Head of caudate nucleus (tissue), 42 donors: ENCODE measurements at regions of chr2 and their contacts with region 1.

Region 1: GRCh38 chr2:218710687-218711549 is at the start of gene TTLL4:
- DNase-seq: peak; percentile 95 to 100 (median 99)

Region 2: DNA sequence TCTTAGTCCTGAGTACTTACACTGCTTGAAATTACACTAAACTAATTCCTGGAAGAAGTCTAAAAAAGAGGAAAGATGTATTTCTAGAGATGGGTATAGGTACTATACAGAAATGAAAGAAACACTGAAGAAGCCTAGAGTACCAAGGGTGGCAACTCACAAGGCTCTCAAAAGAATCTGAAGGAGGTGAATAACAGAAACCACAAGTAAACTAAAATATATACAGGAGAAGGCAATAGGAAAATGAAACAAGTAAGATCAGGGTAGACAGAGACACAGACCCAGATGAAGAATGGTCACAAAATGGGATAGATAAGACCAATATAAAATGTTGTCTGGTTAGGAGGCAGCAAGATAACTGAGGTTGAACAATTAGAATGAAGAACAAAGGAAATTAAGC is 202.6 kb before region 1 on chr2:
- intact Hi-C with region 1: no loop called
- DNase-seq: no peak

Region 3: GRCh38 chr2:218671654-218672566 is 39.0 kb before region 1 on chr2 and contains the starts of genes RNF25 and STK36:
- intact Hi-C with region 1: loop called (anchors 5 kb)
- DNase-seq: peak; percentile 83 to 97 (median 92)

Region 4: DNA sequence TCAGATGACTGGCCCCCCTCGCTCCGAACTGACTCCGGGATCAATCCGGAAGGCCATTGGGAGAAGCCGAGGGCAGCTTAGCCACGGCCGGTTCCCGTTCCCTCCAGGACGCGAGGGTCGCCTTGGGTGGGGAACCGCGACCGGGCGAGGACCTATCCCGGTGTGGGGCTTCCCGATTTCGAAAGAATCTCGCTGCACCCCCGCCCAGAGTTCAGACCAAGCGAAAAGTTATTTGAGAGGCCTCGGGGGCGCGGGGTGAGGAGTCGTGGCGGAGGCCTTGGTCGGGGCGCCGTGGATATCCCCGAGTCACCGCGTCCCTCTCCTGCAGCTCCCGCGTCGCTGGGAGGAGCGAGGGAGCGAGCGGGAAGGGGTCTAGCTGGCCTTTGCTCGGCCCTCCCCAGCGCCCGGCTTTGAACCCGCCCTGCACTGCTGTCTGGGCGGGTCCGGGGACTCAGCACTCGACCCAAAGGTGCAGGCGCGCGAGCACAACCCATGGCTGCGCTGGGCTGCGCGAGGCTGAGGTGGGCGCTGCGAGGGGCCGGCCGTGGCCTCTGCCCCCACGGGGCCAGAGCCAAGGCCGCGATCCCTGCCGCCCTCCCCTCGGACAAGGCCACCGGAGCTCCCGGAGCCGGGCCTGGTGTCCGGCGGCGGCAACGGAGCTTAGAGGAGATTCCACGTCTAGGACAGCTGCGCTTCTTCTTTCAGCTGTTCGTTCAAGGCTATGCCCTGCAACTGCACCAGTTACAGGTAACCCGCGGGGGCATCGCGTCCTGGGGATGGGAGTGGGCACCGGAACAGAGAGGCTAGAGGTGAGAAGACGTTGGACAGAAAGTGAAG is 71.0 kb after region 1 on chr2 and contains the start of gene CYP27A1:
- intact Hi-C with region 1: loop called (anchors 5 kb)
- DNase-seq: peak; percentile 42 to 91 (median 76)

Region 5: GRCh38 chr2:218849721-218850120 is 138.8 kb after region 1 on chr2:
- intact Hi-C with region 1: loop called (anchors 2 kb)
- DNase-seq: peak in 1 of 42 donors; percentile 13